ENCODE measurements at regions of chr18 and their contacts with region 1.

Region 1: GRCh38 chr18:49858309-49859020 is 45.1 kb upstream of the ACAA2 start:
- DNase-seq: peak; percentile 44 to 58
- ATAC-seq: peak in 7 of 8 donors; percentile 40 to 73 (median 63)
- H3K4me3 ChIP-seq: no peak overlapping the region
- H3K27ac ChIP-seq: no peak overlapping the region
- H3K4me1 ChIP-seq: peaks cover 0 to 3% (median 0%) of the 10 kb centered on the region in 9 donors
- H3K27me3 ChIP-seq: peaks cover 0 to under 1% (median 0%) of the 10 kb centered on the region in 7 donors
- CTCF ChIP-seq: peak; percentile 83 to 97 (median 91)

Region 2: GRCh38 chr18:49550621-49551339 is 307.7 kb before region 1 on chr18:
- intact Hi-C with region 1: loop called in 1 of 10 experiments (anchors 5 kb)
- DNase-seq: no peak
- ATAC-seq: no peak
- H3K4me3 ChIP-seq: no peak overlapping the region
- H3K27ac ChIP-seq: no peak overlapping the region
- H3K4me1 ChIP-seq: no peaks in the 10 kb centered on the region
- H3K27me3 ChIP-seq: peaks cover 0 to 29% (median 3%) of the 10 kb centered on the region in 7 donors
- CTCF ChIP-seq: no peak

Region 3: DNA sequence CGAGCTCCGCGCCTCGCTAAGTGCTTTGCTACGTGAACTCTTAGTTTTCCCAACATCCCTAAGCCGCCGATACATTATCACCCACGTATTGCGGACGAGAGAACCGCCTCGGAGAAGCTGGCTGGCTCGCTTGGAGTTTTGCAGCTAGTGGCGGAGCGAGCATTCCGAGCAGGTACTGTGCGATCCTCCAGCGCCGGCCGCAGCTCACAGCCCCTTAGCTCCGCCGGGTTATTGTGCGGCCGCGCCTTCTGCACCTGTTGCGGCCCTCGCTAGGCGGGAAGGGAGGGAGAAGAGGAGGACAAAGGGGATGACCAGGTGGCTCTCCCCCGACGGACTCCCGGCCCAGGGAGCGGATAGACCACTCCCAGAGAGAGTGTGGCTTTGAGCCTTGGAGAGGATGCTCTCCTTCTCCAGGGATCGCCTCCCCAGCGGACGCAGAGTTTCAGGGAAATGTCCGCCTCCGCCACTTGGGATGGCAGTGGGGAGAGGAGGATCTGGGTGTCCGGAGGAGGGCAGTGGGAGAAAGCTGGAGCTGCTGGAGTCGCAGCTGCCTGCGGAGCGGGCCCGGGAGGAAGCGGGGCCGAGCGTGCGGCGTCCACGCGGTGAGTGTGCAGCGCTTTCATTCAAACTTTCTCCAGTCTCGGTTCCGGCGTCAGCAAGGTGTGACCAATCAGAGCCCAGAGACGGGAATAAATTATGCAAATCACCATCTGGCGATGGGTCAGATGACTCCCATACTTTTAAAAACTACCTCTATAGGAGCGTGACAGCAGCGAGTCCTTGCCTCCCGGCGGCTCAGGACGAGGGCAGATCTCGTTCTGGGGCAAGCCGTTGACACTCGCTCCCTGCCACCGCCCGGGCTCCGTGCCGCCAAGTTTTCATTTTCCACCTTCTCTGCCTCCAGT is 296.9 kb before region 1 on chr18 and contains the start of gene LIPG:
- intact Hi-C with region 1: loop called (anchors 1 to 5 kb)
- DNase-seq: no peak
- ATAC-seq: peak in 7 of 8 donors; percentile 29 to 63 (median 40)
- H3K4me3 ChIP-seq: peak within 1 kb of the TSS; percentile 15 to 57 (median 44)
- H3K27ac ChIP-seq: peak within 1 kb of the TSS in 1 of 10 donors; percentile 44
- H3K4me1 ChIP-seq: peaks cover 9 to 45% (median 26%) of the 10 kb centered on the region in 9 donors
- H3K27me3 ChIP-seq: peaks cover 0 to 77% (median 55%) of the 10 kb centered on the region in 7 donors
- CTCF ChIP-seq: no peak
- total RNA-seq, gene LIPG: 0.12 to 14.0 (median 0.42) TPM in 7 of 10 donors, not detected in the others

Region 4: GRCh38 chr18:49795612-49796552 is 62.6 kb before region 1 on chr18:
- intact Hi-C with region 1: loop called in 1 of 10 experiments (anchors 10 kb)
- DNase-seq: no peak
- ATAC-seq: no peak
- H3K4me3 ChIP-seq: no peak overlapping the region
- H3K27ac ChIP-seq: no peak overlapping the region
- H3K4me1 ChIP-seq: no peaks in the 10 kb centered on the region
- H3K27me3 ChIP-seq: no peaks in the 10 kb centered on the region
- CTCF ChIP-seq: no peak

Measured in heart right ventricle (tissue), 16 donors.